ENCODE measurements at regions of chr4 and their contacts with region 1.

Region 1: DNA sequence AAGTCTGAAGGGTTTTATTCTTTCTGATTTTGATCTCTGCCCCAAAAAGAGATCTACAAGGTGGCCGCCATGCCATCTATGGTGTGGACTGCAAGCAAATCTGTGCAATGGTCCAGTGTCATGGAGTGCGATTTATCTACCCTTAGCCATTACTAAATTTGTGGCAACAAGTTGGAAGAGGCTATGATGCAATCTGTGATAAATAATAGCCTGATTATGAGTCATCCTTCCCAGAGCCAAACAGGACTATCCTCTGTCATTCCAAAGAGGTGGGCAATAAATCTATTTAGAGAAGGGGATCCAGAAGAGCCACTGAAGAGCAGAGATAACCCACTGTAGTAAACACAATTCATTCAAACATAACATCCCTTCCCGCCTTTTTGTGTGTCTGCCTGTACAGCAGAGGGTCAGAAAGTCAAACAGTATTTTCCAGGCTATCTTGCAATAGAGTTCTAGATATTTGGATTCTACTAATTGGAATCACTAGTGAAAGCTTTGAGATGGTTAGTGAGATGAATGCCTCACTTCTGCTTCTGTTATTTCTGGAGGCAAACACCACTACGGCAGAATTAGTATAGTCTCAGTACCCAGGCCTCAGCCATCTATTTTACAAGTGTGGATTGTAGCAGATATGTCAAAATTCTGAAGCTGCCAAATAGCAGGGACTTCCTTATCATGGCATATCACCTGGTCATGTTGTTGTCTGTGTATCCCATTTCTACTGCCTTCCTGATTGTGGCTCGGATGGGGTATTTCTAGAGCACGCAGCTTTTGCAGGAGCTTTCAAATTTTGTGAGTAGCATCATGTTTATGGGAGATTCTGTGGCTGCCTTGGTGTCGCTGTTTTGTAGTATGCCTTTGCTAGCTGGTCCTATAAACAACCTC is 192.0 kb downstream of the SMIM20 start:
- H3K4me3 Mint-ChIP-seq: no peak overlapping the region
- H3K27ac Mint-ChIP-seq: peak overlapping the region; percentile 85
- H3K4me1 Mint-ChIP-seq: peaks cover 50% of the 10 kb centered on the region
- H3K27me3 Mint-ChIP-seq: peaks cover 8% of the 10 kb centered on the region

Region 2: GRCh38 chr4:26048378-26048882 is 57.6 kb before region 1 on chr4:
- intact Hi-C with region 1: no loop called
- H3K4me3 Mint-ChIP-seq: no peak overlapping the region
- H3K27ac Mint-ChIP-seq: peak overlapping the region; percentile 44
- H3K4me1 Mint-ChIP-seq: peaks cover 77% of the 10 kb centered on the region
- H3K27me3 Mint-ChIP-seq: peaks cover 10% of the 10 kb centered on the region

Region 3: DNA sequence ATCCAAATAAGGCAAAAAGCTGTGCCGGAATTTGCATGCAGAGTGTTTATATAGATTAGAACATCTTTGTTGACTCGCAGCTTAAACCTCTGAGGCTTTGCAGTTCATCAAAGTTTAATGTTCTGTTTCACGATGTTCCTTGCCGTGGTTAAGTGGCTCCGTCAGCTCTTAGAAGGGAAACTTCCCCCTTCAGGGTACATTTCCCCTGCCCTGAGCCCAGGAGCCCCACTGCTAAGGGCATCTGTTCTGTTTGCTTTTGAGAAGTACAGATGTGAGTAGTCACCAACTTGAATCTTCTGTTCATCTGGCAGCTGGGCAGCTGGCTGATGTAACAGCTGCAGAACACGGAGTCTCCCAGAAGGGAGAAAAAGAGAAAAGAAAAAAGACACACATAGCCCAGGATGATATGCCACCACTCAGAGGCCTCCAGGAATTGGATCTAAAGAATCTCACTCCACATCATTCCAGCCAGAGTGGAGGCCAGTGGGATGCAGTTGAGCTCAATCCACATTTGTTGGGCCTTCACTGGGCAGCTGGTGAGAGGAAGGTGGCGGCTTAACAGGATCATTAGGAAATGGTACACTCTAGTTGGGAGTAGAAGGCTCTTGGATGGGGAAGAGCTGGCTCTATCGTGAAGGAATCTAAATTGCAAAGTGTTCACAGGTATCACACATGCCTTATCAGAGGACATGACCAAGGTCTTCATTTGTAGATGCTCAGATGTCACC is 36.0 kb after region 1 on chr4:
- intact Hi-C with region 1: loop called (anchors 5 kb)
- H3K4me3 Mint-ChIP-seq: peak overlapping the region; percentile 58
- H3K27ac Mint-ChIP-seq: peak overlapping the region; percentile 99
- H3K4me1 Mint-ChIP-seq: peaks cover 90% of the 10 kb centered on the region
- H3K27me3 Mint-ChIP-seq: peaks cover 2% of the 10 kb centered on the region

Measured in dendritic cell treated with granulocyte-macrophage colony-stimulating factor and Interleukin-4, amounts not matched to agents 40 ng/mL and 50 ng/mL, for 4 days (primary cell).